Aorta (tissue), 5 donors: ENCODE measurements at regions of chr4 and their contacts with region 1.

Region 1: DNA sequence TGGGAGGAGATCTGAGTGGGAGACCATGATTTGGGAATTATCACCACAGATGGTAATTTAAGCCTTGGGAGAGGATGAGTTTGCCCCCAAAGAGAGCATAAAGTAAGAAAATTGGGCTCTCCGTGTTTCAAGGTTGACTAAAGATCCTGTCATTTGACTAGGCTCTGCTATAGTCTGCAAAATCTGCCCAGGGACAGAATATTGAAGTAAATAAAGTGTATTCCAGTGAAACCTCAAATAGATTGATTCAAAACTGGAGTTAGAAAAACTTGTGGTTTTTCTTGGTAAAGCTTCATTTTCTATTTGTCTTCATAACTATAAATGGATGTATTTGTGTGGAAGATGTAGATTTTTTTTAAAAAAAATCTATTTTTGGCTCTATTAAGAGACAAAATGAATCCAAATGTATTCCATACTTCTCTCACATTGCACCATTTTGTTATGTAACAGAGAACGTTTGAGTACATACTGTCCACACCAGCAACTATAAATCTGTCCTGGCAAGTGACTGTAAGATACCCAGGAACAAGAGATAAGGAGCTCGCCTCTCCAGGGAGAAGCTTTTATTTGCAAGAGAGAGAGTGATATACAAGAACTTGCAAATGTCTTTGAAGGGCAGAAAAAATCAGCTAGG is 170.2 kb downstream of the CBR4 start:
- DNase-seq: no peak
- ATAC-seq: peak; percentile 48
- H3K4me3 ChIP-seq: no peak overlapping the region
- H3K27ac ChIP-seq: peak overlapping the region; percentile 84 to 93
- H3K4me1 ChIP-seq: peaks cover 20 to 25% of the 10 kb centered on the region in 2 donors
- H3K27me3 ChIP-seq: no peaks in the 10 kb centered on the region

Region 2: GRCh38 chr4:168765726-168766125 is 74.1 kb before region 1 on chr4:
- intact Hi-C with region 1: no loop called
- DNase-seq: peak in 1 of 2 donors; percentile 80
- ATAC-seq: peak; percentile 54
- H3K4me3 ChIP-seq: no peak overlapping the region
- H3K27ac ChIP-seq: peak overlapping the region in 1 of 2 donors; percentile 61
- H3K4me1 ChIP-seq: peaks cover 0 to 6% of the 10 kb centered on the region in 2 donors
- H3K27me3 ChIP-seq: no peaks in the 10 kb centered on the region

Region 3: DNA sequence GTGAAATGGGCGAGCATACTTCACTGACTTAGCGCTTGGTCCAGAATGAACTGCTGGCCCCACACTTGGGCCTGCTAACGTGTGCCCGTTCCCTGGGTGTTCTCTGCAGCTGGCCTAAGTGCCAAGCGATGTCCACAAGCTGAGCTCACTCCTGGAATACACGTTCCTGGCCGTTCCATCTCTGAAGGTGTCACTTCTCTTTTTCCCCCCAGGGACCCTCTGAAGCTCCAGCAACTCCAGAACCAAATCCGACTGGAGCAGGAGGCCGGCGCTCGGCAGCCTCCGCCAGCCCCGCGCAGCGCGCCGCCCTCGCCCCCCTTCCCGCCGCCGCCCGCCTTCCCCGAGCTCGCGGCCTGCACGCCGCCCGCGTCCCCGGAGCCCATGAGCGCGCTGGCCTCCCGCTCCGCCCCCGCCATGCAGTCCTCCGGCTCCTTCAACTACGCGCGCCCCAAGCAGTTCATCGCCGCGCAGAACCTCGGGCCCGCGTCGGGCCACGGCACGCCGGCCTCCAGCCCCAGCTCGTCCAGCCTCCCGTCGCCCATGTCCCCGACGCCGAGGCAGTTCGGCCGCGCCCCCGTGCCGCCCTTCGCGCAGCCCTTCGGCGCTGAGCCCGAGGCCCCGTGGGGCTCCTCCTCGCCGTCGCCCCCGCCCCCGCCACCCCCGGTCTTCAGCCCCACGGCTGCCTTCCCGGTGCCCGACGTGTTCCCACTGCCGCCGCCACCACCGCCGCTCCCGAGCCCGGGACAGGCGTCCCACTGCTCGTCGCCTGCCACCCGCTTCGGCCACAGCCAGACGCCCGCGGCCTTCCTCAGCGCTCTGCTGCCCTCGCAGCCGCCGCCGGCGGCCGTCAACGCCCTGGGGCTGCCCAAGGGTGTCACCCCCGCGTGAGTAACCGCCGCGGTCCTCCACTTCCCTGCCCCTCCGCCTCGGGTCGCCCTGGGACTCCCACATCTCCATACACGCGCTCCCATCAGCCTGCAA is 37.9 kb after region 1 on chr4:
- intact Hi-C with region 1: loop called in 1 of 2 experiments (anchors 5 kb)
- DNase-seq: peak; percentile 74 to 88
- ATAC-seq: peak; percentile 77
- H3K4me3 ChIP-seq: peak overlapping the region in 1 of 2 donors; percentile 11
- H3K27ac ChIP-seq: peak overlapping the region; percentile 79 to 91
- H3K4me1 ChIP-seq: peaks cover 7 to 12% of the 10 kb centered on the region in 2 donors
- H3K27me3 ChIP-seq: no peaks in the 10 kb centered on the region